Activated naive CD4-positive, alpha-beta T cell treated with anti-CD3 and anti-CD28 coated beads for 36 hours (primary cell): ENCODE measurements at regions of chr1 and their contacts with region 1.

Region 1: DNA sequence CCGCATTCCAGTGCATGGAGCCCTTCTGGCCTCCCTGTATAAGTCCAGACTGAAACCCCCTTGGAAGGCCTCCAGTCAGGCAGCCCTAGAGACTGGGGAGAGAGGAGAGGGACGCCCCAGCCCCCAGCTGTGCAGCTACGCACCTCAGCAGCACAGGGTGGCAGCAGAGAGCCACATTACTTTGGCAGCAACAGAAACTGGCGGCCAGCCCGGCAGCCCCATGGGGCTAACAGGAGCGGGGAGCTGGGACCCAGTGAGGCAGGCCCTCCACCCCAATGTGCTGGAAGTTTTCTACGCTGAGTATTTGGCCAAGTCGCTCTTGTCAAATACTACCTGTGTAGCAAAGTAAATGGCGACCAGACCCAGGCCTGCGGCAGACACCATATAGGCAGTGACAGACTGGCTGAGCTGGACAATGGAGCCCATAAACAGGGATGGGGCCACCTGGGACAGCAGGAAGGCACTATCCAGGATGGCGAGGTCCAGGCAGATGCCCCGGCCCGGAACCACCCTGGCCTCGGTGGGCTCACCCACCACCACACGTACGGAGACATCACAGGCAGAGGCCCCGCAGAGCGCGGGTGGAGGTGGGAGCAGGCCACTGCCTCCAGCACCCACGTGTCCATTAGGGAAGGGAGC is 21.2 kb downstream of the SLC45A3 start:
- DNase-seq: peak; percentile 84
- H3K4me3 Mint-ChIP-seq: no peak overlapping the region
- H3K27ac Mint-ChIP-seq: no peak overlapping the region
- H3K4me1 Mint-ChIP-seq: peaks cover 2% of the 10 kb centered on the region
- H3K27me3 Mint-ChIP-seq: peaks cover 3% of the 10 kb centered on the region

Region 2: GRCh38 chr1:205485338-205486228 is 173.5 kb before region 1 on chr1:
- CTCF ChIA-PET with region 1: interaction called, 15 read pairs
- intact Hi-C with region 1: loop called (anchors 1 kb)
- DNase-seq: peak; percentile 79
- H3K4me3 Mint-ChIP-seq: no peak overlapping the region
- H3K27ac Mint-ChIP-seq: no peak overlapping the region
- H3K4me1 Mint-ChIP-seq: peaks cover 12% of the 10 kb centered on the region
- H3K27me3 Mint-ChIP-seq: peaks cover 58% of the 10 kb centered on the region

Region 3: DNA sequence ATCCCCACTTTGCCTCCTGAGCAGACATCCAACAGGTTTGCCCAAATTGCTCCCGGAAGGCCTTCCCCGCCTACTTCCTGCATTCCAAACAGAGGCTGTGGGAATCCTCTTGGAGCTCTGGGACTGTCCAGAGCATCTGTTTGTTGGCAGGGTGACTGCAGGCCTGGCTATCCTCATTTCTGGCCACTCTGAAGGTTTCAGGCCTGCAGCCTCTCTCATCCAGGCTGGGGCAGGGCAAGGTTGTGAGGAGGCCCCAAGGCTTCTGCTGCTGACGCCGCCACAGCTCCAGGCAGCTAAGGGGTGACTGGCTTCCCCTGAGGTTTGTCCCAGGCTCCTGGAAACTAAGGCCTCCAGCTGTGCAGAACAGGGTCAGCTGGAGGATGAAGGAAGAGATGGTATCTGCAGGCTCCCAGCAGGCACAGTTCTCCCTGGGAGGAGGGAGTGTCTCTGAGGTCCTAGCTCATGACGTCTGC is 143.2 kb before region 1 on chr1:
- CTCF ChIA-PET with region 1: no interaction called
- intact Hi-C with region 1: no loop called
- DNase-seq: no peak
- H3K4me3 Mint-ChIP-seq: no peak overlapping the region
- H3K27ac Mint-ChIP-seq: no peak overlapping the region
- H3K4me1 Mint-ChIP-seq: no peaks in the 10 kb centered on the region
- H3K27me3 Mint-ChIP-seq: no peaks in the 10 kb centered on the region

Region 4: DNA sequence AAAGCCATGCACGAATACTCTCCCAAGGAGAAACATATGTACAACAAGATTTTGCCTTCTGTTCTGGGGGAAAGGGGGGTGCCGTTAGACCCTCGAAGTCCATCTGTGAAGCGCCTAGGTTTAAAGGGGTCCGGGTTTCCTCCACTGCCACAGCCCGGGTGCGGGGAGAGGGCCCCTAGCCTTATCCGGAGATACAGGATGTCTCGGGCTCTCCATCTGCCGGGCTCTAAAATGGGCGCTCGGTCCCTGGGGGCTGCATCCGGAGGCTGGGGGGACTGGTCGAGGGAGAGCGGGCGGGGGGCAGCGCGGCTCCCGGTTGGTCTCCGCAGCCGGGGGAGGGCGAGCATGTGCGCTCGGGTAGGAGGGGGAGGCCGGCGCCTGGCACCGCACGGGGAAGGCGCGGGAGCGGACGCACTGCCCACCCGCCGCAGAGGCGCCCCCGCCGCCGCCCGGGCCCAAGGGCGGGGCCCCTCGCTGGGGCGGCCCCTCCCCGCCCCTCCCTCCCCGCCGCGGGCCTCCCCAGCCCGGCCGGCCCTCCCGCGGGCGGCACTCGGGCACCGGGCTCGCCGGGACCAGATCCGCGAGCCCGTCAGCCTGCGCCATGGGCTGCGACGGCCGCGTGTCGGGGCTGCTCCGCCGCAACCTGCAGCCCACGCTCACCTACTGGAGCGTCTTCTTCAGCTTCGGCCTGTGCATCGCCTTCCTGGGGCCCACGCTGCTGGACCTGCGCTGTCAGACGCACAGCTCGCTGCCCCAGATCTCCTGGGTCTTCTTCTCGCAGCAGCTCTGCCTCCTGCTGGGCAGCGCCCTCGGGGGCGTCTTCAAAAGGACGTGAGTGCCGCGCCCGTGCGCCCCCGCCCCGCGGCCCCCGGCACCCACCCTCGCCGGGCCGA is 90.3 kb before region 1 on chr1:
- CTCF ChIA-PET with region 1: interaction called, 15 read pairs
- intact Hi-C with region 1: no loop called
- DNase-seq: no peak
- H3K4me3 Mint-ChIP-seq: peak overlapping the region; percentile 50
- H3K27ac Mint-ChIP-seq: no peak overlapping the region
- H3K4me1 Mint-ChIP-seq: peaks cover 1% of the 10 kb centered on the region
- H3K27me3 Mint-ChIP-seq: peaks cover 34% of the 10 kb centered on the region

Region 5: DNA sequence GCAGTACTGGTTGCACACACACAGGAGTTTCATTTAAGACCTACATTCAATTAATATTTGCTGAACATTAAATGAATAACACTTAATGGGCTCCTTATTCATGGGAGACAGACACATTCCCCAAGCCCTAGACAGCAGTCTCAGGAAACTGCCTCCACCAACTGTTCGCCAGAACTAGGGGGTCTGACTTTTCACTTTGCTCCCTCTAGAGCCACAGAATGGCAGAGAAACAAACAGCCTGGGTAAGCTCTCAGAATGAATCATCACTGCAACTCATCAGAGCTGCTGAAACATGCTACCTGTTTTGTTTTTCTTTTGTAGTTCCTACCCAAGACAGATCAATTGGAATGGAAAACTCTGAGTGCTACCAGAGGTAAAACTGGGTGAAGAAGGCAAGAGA is 59.0 kb before region 1 on chr1:
- CTCF ChIA-PET with region 1: interaction called, 390 read pairs
- intact Hi-C with region 1: no loop called
- DNase-seq: peak; percentile 50
- H3K4me3 Mint-ChIP-seq: no peak overlapping the region
- H3K27ac Mint-ChIP-seq: peak overlapping the region; percentile 59
- H3K4me1 Mint-ChIP-seq: peaks cover 43% of the 10 kb centered on the region
- H3K27me3 Mint-ChIP-seq: no peaks in the 10 kb centered on the region

Region 6: GRCh38 chr1:205680073-205680851 is 21.2 kb after region 1 on chr1 and contains the start of gene SLC45A3:
- CTCF ChIA-PET with region 1: interaction called, 93 read pairs
- intact Hi-C with region 1: no loop called
- DNase-seq: peak; percentile 17
- H3K4me3 Mint-ChIP-seq: peak within 1 kb of the TSS; percentile 70
- H3K27ac Mint-ChIP-seq: no peak within 1 kb of the TSS
- H3K4me1 Mint-ChIP-seq: peaks cover 12% of the 10 kb centered on the region
- H3K27me3 Mint-ChIP-seq: peaks cover 10% of the 10 kb centered on the region
- total RNA-seq, gene SLC45A3: 0.15 to 0.26 TPM

Region 7: GRCh38 chr1:205775015-205775716 is 116.1 kb after region 1 on chr1 and contains the start of gene RAB29:
- CTCF ChIA-PET with region 1: interaction called, 15 read pairs
- intact Hi-C with region 1: no loop called
- DNase-seq: peak; percentile 93
- H3K4me3 Mint-ChIP-seq: peak within 1 kb of the TSS; percentile 83
- H3K27ac Mint-ChIP-seq: peak within 1 kb of the TSS; percentile 94
- H3K4me1 Mint-ChIP-seq: peaks cover 53% of the 10 kb centered on the region
- H3K27me3 Mint-ChIP-seq: no peaks in the 10 kb centered on the region
- total RNA-seq, gene RAB29: 25.0 TPM

Region 8: DNA sequence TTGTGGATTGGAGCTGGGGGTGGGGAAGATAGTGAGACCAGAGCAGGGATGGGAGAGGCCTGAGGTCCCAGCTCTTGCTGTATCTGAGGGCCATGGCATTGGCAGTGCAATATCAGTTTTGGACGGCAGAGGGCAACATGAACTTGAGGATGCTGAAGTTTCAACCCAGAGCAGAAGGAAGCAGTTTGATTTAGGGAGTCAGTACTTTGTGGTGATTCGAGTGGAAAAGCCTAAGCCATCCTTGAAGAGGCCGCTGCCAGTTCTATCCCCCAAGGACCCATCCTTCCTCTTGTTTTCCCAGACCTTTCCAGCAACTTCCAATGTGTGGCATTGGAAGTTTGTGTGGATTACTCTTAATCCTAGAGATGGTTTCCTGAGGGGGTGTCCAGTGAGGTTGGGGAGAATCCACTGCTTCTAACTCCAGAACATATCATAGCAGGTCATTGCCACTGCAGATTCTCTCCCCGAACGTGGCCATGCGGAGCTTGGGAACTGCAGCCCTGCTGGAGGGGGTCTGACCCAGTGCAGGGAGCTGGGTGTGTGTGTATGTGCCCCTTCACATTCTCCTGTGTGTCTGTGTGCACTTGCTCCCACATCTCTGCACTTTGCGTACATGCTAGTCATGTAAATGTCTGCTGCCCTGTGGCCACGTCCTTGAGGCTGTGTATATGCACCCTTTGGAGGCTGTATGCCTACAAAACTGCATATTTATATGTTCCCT is 260.1 kb after region 1 on chr1:
- CTCF ChIA-PET with region 1: interaction called, 24 read pairs
- intact Hi-C with region 1: loop called (anchors 5 kb)
- DNase-seq: peak; percentile 91
- H3K4me3 Mint-ChIP-seq: no peak overlapping the region
- H3K27ac Mint-ChIP-seq: no peak overlapping the region
- H3K4me1 Mint-ChIP-seq: no peaks in the 10 kb centered on the region
- H3K27me3 Mint-ChIP-seq: no peaks in the 10 kb centered on the region